ENCODE measurements at regions of chr17 and their contacts with region 1.

Region 1: GRCh38 chr17:36148559-36149295 is 27.7 kb downstream of the TBC1D3B start:
- DNase-seq: peak; percentile 68
- ATAC-seq: peak; percentile 98
- H3K4me3 ChIP-seq: no peak overlapping the region
- H3K27ac ChIP-seq: no peak overlapping the region
- H3K4me1 ChIP-seq: peaks cover 0 to 6% of the 10 kb centered on the region in 2 experiments; a peak in 1 of 4 replicates
- H3K27me3 ChIP-seq: peaks cover 13% of the 10 kb centered on the region; the same call in 1 of the 2 replicates
- CTCF ChIP-seq: peak; percentile 98 to 100 (median 100)
- POLR2A ChIP-seq: no peak
- RAD21 ChIP-seq: peak; percentile 99

Region 2: DNA sequence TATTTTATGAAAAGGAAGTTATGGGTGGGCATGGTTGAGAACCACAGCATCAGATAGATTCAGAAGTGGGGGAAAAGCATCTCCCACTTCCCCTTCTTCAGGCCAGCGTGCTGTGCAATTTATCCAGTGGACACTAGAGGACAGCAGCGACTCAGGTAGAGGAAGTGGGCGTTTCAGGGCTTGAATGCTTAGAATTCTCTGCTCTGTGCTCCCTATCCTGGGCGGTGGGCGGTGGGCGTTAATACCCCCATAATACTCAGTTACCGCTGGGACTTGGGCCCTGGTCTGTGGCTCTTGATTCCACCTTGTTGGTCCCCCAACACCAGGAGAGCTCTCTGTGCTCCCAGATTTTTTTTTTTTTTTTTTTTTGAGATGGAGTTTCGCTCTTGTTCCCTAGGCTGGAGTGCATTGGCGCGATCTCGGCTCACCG is 201.6 kb before region 1 on chr17:
- CTCF ChIA-PET with region 1: interaction called, 15 read pairs
- POLR2A ChIA-PET with region 1: no interaction called
- RAD21 ChIA-PET with region 1: no interaction called
- intact Hi-C with region 1: no loop called
- DNase-seq: peak; percentile 46
- ATAC-seq: peak; percentile 94
- H3K4me3 ChIP-seq: peak overlapping the region; percentile 34 to 49
- H3K27ac ChIP-seq: no peak overlapping the region
- H3K4me1 ChIP-seq: peaks cover 0 to 14% of the 10 kb centered on the region in 2 experiments; a peak in 3 of 4 replicates
- H3K27me3 ChIP-seq: no peaks in the 10 kb centered on the region
- CTCF ChIP-seq: peak; percentile 49 to 86 (median 74); a peak in 5 of 6 replicates
- POLR2A ChIP-seq: no peak
- RAD21 ChIP-seq: peak; percentile 76

Region 3: DNA sequence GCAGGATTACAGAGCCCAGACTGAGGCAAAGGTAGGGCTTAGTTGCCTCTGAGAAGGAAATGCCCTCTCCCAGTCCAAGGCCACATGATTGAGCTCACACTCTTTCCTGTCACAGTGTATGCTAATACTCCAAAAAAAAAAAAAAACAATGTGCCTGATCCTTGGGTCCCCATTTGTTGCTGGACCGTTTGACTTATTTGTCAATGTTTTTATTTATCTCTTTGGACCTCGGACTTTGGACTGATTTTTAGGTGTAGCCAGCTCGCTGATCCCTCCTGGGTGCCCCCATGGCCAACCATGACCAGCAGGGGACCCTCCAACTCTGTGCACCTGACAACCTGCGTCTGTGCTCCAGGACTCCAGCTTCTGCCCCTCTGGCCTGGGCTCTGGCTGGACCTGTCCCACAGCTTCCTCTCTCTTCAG is 166.8 kb before region 1 on chr17:
- CTCF ChIA-PET with region 1: interaction called, 112 read pairs
- POLR2A ChIA-PET with region 1: no interaction called
- RAD21 ChIA-PET with region 1: interaction called, 3 to 4 read pairs
- intact Hi-C with region 1: no loop called
- DNase-seq: no peak
- ATAC-seq: peak; percentile 46; the same call in 1 of the 2 replicates
- H3K4me3 ChIP-seq: no peak overlapping the region
- H3K27ac ChIP-seq: no peak overlapping the region
- H3K4me1 ChIP-seq: no peaks in the 10 kb centered on the region
- H3K27me3 ChIP-seq: no peaks in the 10 kb centered on the region
- CTCF ChIP-seq: peak; percentile 6 to 21 (median 14); a peak in 2 of 6 replicates
- POLR2A ChIP-seq: no peak
- RAD21 ChIP-seq: peak; percentile 39

Region 4: GRCh38 chr17:36111068-36111490 is 37.6 kb before region 1 on chr17:
- CTCF ChIA-PET with region 1: interaction called, 13 read pairs
- POLR2A ChIA-PET with region 1: no interaction called
- RAD21 ChIA-PET with region 1: no interaction called
- intact Hi-C with region 1: no loop called
- DNase-seq: no peak
- ATAC-seq: no peak
- H3K4me3 ChIP-seq: no peak overlapping the region
- H3K27ac ChIP-seq: no peak overlapping the region
- H3K4me1 ChIP-seq: no peaks in the 10 kb centered on the region
- H3K27me3 ChIP-seq: no peaks in the 10 kb centered on the region
- CTCF ChIP-seq: no peak
- POLR2A ChIP-seq: no peak
- RAD21 ChIP-seq: no peak

Region 5: DNA sequence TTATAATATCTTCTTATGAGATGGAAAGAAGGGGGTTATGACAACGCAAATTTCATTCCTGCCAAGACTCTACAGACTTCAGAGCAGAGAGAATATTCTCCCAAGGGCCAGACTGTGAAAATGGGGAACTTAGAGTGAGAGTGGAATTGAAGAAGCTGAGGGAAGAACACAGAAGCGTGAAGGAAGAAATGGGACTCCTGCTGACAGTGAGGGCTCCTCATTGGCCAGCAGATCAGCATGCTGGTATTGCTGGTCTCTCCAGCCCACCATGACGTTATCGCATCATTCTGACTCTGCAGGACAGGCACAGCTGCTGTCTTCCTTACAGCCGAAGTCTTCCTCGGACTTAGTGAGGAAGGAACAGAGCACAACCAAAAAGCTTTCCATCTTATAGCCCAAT is 20.8 kb before region 1 on chr17:
- CTCF ChIA-PET with region 1: interaction called, 37 read pairs
- POLR2A ChIA-PET with region 1: no interaction called
- RAD21 ChIA-PET with region 1: no interaction called
- intact Hi-C with region 1: no loop called
- DNase-seq: no peak
- ATAC-seq: no peak
- H3K4me3 ChIP-seq: no peak overlapping the region
- H3K27ac ChIP-seq: no peak overlapping the region
- H3K4me1 ChIP-seq: no peaks in the 10 kb centered on the region
- H3K27me3 ChIP-seq: 0 out of 2 replicates have a peak, but pooled peaks cover 7% of the 10 kb centered on the region
- CTCF ChIP-seq: no peak
- POLR2A ChIP-seq: no peak
- RAD21 ChIP-seq: no peak

Region 6: DNA sequence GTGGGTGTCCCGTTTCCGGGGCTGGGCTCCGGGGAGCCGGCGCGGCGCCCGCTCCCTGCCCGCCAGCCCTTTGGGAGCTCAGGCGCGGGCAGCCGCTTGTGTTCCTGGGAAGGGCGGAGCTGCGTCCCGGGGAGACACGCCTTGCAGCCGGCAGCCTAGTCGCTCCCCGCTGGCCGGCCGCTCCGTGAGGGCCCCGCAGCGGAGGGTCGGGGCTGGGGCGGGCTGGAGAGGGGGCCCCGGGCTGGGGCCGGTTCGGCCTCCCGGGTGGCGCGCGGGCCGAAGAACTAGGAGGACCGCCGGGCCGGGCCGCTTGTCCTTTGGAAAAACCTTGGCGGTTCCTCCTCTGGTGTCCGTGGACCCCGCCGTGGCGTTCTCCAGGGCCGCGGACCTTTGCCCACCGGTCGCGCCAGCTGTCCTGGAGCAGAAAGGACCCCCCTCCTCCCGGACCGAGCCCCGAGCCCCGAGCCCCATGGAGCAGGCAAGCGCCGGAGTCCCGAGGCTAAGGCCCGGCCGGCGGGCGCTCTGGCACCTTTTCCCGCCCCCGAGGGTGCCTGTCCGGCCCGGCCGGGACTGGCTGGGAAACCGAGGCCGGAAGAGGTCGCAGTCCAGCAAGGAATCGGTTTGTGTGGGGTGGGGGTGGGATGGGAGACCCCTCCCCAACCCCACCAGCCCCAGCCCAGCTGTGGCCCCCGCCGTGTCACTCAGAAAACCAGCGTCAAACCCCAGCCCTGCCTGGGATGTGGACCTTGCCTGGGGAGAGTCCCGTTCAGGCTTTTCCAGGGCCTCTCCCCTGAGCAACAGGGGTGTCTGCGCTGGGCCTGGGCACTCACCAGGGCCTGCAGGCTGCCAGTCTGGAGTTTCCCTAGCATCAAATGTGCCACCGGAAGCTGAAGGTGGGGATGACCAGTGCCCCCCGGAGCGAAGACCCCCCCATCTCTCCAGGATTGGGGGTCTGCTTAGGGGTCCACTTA is 34.6 kb after region 1 on chr17:
- CTCF ChIA-PET with region 1: interaction called, 12 read pairs
- POLR2A ChIA-PET with region 1: no interaction called
- RAD21 ChIA-PET with region 1: interaction called in 1 of 2 experiments, 3 read pairs
- intact Hi-C with region 1: no loop called
- DNase-seq: peak; percentile 39
- ATAC-seq: peak; percentile 93
- H3K4me3 ChIP-seq: peak overlapping the region; percentile 63 to 68
- H3K27ac ChIP-seq: peak overlapping the region; percentile 17; the same call in 1 of the 2 replicates
- H3K4me1 ChIP-seq: peaks cover 0 to 14% of the 10 kb centered on the region in 2 experiments; a peak in 3 of 4 replicates
- H3K27me3 ChIP-seq: no peaks in the 10 kb centered on the region
- CTCF ChIP-seq: no peak
- POLR2A ChIP-seq: no peak
- RAD21 ChIP-seq: no peak; the same call in 1 of the 2 replicates

Measured in HCT116 (cell line).